ENCODE measurements at regions of chr5 and their contacts with region 1.

Region 1: DNA sequence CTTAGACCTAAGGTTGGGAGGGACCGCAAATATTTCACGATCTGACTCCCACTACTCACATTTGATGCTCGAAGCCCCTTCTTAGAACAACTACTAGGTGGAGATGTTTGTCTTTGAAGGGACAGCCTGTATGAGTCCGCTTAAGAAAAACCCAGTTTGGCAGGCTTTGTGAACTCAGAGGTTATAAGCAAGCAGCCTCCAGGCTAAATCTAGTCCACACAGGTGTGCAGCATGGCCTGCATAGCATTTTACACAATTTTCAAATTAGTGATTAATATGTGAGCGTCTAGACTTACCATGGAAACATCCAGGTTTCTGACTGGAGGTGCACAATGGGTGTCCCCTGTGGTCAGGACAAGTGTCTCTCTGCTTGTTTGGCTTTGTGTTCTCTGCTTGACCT is 127.1 kb downstream of the KIF4B start:
- DNase-seq: no peak
- CTCF ChIP-seq: no peak

Region 2: GRCh38 chr5:155128786-155129512 is 11.7 kb before region 1 on chr5:
- CTCF ChIA-PET with region 1: interaction called, 24 read pairs
- POLR2A ChIA-PET with region 1: no interaction called
- DNase-seq: no peak
- CTCF ChIP-seq: no peak

Region 3: GRCh38 chr5:155154973-155155372 is 14.3 kb after region 1 on chr5:
- CTCF ChIA-PET with region 1: interaction called, 17 read pairs
- POLR2A ChIA-PET with region 1: no interaction called
- DNase-seq: no peak
- CTCF ChIP-seq: no peak

Measured in GM10248 (cell line).